Colonic mucosa (tissue), 4 donors: ENCODE measurements at regions of chr21 and their contacts with region 1.

Region 1: GRCh38 chr21:33199516-33200217 is 30.1 kb upstream of the IFNAR2 start:
- DNase-seq: peak; percentile 90
- H3K4me3 ChIP-seq: no peak overlapping the region
- H3K27ac ChIP-seq: no peak overlapping the region
- H3K4me1 ChIP-seq: peaks cover 11% of the 10 kb centered on the region
- H3K27me3 ChIP-seq: no peaks in the 10 kb centered on the region
- CTCF ChIP-seq: peak; percentile 68

Region 2: GRCh38 chr21:32834916-32835235 is 364.8 kb before region 1 on chr21:
- intact Hi-C with region 1: loop called (anchors 5 kb)
- DNase-seq: no peak
- H3K4me3 ChIP-seq: no peak overlapping the region
- H3K27ac ChIP-seq: no peak overlapping the region
- H3K4me1 ChIP-seq: no peaks in the 10 kb centered on the region
- H3K27me3 ChIP-seq: no peaks in the 10 kb centered on the region
- CTCF ChIP-seq: no peak

Region 3: GRCh38 chr21:32940079-32941014 is 259.3 kb before region 1 on chr21:
- intact Hi-C with region 1: loop called (anchors 5 kb)
- DNase-seq: peak; percentile 40
- H3K4me3 ChIP-seq: no peak overlapping the region
- H3K27ac ChIP-seq: no peak overlapping the region
- H3K4me1 ChIP-seq: no peaks in the 10 kb centered on the region
- H3K27me3 ChIP-seq: peaks cover 3% of the 10 kb centered on the region
- CTCF ChIP-seq: peak; percentile 70

Region 4: DNA sequence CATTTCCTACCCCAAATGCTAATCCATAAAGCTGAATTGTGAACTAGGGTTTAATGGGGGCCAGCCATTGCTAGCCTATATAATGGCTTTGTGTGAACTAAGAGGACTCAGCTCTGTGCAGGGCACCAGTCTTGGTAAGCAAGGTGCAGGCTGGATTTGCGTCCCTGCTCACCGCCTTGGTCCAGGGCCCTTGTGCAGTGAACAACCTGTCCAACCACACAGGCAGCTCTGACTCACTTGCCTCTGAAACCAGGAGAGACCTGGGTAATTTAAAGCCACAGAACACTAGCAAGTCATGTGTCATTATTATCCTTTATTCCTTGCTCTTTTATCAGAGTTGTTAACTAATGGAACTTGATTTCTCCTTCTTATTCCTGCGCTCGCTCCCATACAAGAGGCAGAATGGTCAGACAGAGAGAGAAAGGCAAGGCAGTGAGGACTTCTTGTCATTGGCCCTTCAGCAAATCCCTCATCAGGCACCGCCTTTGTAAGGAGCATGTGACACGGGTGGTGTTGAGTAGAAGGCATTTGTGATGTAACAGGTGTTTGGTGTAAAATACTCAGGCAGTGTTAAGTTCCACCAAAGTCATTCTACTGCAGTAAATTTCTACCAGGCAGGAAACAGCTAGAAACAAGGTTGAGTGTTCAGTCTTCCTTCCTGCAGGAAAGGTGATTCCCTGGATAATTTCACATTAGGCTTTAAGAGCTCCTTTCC is 241.2 kb before region 1 on chr21:
- intact Hi-C with region 1: no loop called
- DNase-seq: no peak
- H3K4me3 ChIP-seq: no peak overlapping the region
- H3K27ac ChIP-seq: no peak overlapping the region
- H3K4me1 ChIP-seq: no peaks in the 10 kb centered on the region
- H3K27me3 ChIP-seq: no peaks in the 10 kb centered on the region
- CTCF ChIP-seq: no peak

Region 5: GRCh38 chr21:33266050-33266788 is 66.6 kb after region 1 on chr21 and contains the start of gene IL10RB:
- intact Hi-C with region 1: loop called (anchors 5 kb)
- DNase-seq: peak; percentile 87
- H3K4me3 ChIP-seq: peak within 1 kb of the TSS; percentile 91
- H3K27ac ChIP-seq: peak within 1 kb of the TSS; percentile 92
- H3K4me1 ChIP-seq: peaks cover 5% of the 10 kb centered on the region
- H3K27me3 ChIP-seq: no peaks in the 10 kb centered on the region
- CTCF ChIP-seq: no peak
- total RNA-seq, gene IL10RB: 48.0 to 86.3 TPM

Region 6: DNA sequence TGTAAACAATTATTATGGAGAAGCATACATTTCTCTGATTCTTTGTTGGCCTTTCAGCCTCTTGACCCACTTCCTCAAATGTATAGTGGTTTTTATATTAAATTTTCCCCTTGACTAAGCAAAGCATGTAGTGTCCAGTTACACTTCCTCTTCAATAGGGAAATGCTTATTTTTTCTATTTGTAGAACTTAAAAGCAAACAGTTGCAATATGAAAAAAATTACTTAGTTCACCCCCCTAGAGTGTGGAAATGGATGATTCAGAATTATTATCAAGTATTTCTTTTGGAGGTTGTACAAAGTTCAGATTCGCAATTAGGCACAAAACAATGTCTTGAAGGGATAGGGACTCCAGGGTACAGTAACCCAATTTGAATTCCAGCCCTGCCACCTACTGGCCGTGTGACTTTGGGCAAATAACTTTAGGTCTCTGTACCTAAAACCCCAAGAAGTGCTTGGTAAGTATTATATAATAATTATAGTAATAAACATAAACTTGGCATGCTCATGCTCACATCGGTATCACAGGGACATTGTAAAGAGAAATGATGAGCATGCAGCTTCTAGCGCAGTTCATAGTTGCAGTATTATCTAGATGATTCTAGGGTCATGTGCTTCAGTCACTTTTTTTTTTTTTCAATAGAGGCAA is 174.9 kb after region 1 on chr21:
- intact Hi-C with region 1: loop called (anchors 5 kb)
- DNase-seq: peak; percentile 75
- H3K4me3 ChIP-seq: no peak overlapping the region
- H3K27ac ChIP-seq: peak overlapping the region; percentile 31
- H3K4me1 ChIP-seq: no peaks in the 10 kb centered on the region
- H3K27me3 ChIP-seq: no peaks in the 10 kb centered on the region
- CTCF ChIP-seq: peak; percentile 63

Region 7: GRCh38 chr21:33441489-33442477 is 242.1 kb after region 1 on chr21:
- intact Hi-C with region 1: loop called (anchors 2 kb)
- DNase-seq: peak; percentile 67
- H3K4me3 ChIP-seq: no peak overlapping the region
- H3K27ac ChIP-seq: peak overlapping the region; percentile 23
- H3K4me1 ChIP-seq: no peaks in the 10 kb centered on the region
- H3K27me3 ChIP-seq: no peaks in the 10 kb centered on the region
- CTCF ChIP-seq: no peak